Endothelial cell of umbilical vein (primary cell): ENCODE measurements at regions of chr1 and their contacts with region 1.

Region 1: GRCh38 chr1:236502885-236503639 is 20.7 kb upstream of the LGALS8 start:
- DNase-seq: peak; percentile 89
- H3K4me3 ChIP-seq: peak overlapping the region in 1 of 3 experiments; percentile 4
- H3K27ac ChIP-seq: peak overlapping the region; percentile 1
- H3K4me1 ChIP-seq: peaks cover 10% of the 10 kb centered on the region
- H3K27me3 ChIP-seq: no peaks in the 10 kb centered on the region
- CTCF ChIP-seq: no peak
- POLR2A ChIP-seq: peak; percentile 48

Region 2: DNA sequence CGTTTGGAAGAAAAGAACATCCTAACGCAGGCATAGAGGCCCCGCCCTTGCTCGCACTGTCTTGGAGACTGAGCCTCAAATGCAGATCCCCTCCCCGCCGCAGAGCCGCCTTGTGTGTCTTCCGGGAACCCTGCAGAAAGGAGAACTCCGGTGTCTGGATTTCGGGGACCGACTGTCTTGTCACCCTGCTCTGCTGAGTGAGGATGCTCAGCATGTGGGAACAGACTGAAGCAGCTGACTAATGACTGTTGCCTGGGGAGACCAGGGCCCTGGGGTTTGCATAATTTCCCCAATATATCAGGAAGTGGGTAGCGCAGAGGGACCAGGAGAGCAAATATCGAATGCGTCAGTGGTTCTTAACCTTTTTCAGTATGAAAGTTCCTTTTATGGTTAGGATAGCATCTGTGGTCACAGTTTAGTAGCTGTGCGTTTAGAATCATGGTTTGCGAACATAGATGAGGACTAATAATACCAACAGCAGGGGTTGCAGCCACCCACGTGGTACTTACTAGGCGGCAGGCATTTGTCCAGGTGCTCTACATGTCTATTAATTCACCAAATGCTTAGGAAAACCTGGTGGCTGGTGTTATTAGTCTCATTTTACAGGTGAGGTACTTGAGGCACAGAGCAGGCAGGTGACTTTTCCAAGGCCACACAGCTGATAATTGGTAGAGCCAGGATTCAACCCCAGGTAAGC is 346.4 kb before region 1 on chr1:
- CTCF ChIA-PET with region 1: no interaction called
- POLR2A ChIA-PET with region 1: no interaction called
- dilution Hi-C with region 1: no loop called
- intact Hi-C with region 1: no loop called
- DNase-seq: no peak
- H3K4me3 ChIP-seq: no peak overlapping the region
- H3K27ac ChIP-seq: no peak overlapping the region
- H3K4me1 ChIP-seq: no peaks in the 10 kb centered on the region
- H3K27me3 ChIP-seq: no peaks in the 10 kb centered on the region
- CTCF ChIP-seq: no peak
- POLR2A ChIP-seq: no peak

Region 3: GRCh38 chr1:236281654-236282424 is 221.2 kb before region 1 on chr1 and contains the start of gene ERO1B:
- CTCF ChIA-PET with region 1: no interaction called
- POLR2A ChIA-PET with region 1: no interaction called
- dilution Hi-C with region 1: no loop called
- intact Hi-C with region 1: loop called (anchors 5 kb)
- DNase-seq: peak; percentile 95
- H3K4me3 ChIP-seq: peak within 1 kb of the TSS; percentile 39 to 99 (median 65)
- H3K27ac ChIP-seq: no peak within 1 kb of the TSS
- H3K4me1 ChIP-seq: peaks cover 3% of the 10 kb centered on the region
- H3K27me3 ChIP-seq: peaks cover 16 to 22% of the 10 kb centered on the region in 2 experiments
- CTCF ChIP-seq: peak in 1 of 2 donors; percentile 2
- POLR2A ChIP-seq: peak; percentile 21
- total RNA-seq, gene ERO1B: 3.6 and 5.1 TPM in 2 replicates

Region 4: DNA sequence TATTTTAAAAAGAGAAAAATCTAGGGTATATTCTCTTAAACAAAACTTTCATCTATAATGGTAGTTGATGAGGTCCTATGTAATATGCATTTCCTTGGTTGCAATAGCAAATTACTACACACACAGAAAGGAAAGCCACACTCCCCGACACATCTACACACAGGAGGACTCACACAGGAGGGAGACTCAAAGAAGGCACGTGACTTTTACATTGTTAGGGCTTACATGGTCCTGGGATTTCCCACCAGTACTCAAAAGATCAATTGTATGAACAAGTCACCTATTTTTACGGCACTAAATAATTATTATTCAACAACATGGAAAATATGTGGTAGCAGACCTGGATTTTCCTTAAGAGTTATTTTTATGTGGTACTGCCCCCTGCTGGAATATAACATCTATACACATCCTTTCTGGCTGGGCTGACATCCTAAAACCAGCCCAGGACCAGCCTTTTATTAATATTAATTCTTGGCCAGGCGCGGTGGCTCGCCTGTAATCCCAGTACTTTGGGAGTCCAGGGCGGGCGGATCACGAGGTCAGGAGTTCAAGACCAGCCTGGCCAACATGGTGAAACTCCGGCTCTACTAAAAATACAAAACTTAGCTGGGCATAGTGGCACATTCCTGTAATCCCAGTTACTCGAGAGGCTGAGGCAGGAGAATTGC is 13.2 kb before region 1 on chr1:
- CTCF ChIA-PET with region 1: interaction called, 9 read pairs
- POLR2A ChIA-PET with region 1: no interaction called
- dilution Hi-C with region 1: no loop called
- intact Hi-C with region 1: loop called (anchors 1 kb)
- DNase-seq: peak; percentile 37
- H3K4me3 ChIP-seq: no peak overlapping the region
- H3K27ac ChIP-seq: no peak overlapping the region
- H3K4me1 ChIP-seq: no peaks in the 10 kb centered on the region
- H3K27me3 ChIP-seq: no peaks in the 10 kb centered on the region
- CTCF ChIP-seq: peak; percentile 33 to 46
- POLR2A ChIP-seq: no peak

Region 5: GRCh38 chr1:236515443-236515958 is 12.4 kb after region 1 on chr1:
- CTCF ChIA-PET with region 1: interaction called, 3 read pairs
- POLR2A ChIA-PET with region 1: no interaction called
- dilution Hi-C with region 1: no loop called
- intact Hi-C with region 1: loop called (anchors 1 kb)
- DNase-seq: peak; percentile 17
- H3K4me3 ChIP-seq: no peak overlapping the region
- H3K27ac ChIP-seq: no peak overlapping the region
- H3K4me1 ChIP-seq: no peaks in the 10 kb centered on the region
- H3K27me3 ChIP-seq: peaks cover 0 to 5% of the 10 kb centered on the region in 2 experiments
- CTCF ChIP-seq: no peak
- POLR2A ChIP-seq: no peak

Region 6: DNA sequence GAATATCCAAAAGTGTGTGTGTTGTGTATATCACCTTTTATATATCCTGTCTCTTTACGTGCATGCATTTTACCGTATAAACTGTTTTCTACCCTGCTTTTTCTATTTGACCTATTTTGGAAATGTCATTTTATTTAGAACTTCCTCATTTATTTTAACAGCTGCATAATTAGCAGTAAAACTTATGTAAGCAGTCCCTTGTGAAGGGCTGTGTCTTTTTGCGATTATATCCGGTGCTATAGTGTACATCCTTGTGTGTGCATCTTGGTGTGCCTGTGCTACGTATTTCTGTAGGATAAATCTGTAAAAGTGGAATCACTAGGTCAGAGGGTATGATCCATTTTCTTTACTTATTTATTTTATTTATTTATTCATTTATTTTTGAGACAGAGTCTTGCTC is 27.9 kb after region 1 on chr1:
- CTCF ChIA-PET with region 1: no interaction called
- POLR2A ChIA-PET with region 1: interaction called, 3 read pairs
- dilution Hi-C with region 1: no loop called
- intact Hi-C with region 1: loop called (anchors 1 kb)
- DNase-seq: no peak
- H3K4me3 ChIP-seq: no peak overlapping the region
- H3K27ac ChIP-seq: no peak overlapping the region
- H3K4me1 ChIP-seq: peaks cover 14% of the 10 kb centered on the region
- H3K27me3 ChIP-seq: no peaks in the 10 kb centered on the region
- CTCF ChIP-seq: no peak
- POLR2A ChIP-seq: no peak

Region 7: DNA sequence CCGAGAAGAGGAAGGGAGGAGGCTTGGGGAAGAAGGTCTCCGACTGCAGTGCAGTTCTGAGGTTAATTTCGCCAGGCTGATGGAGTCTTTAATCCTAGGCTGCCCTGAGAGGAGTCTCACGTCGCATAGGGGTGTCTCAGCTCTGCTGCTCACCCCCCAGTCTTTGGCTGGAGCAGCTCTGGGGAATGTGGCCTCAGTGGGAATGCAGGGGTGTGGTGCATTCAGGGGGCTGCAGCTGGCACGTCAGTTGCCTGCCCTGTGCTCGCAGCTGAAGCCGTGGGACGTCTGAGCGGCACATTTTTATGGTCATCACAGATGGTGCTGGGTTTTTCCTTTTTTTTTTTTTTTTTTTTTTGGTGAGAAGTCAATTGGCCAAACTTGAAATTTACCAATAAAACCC is 221.4 kb after region 1 on chr1:
- CTCF ChIA-PET with region 1: no interaction called
- POLR2A ChIA-PET with region 1: no interaction called
- dilution Hi-C with region 1: no loop called
- intact Hi-C with region 1: no loop called
- DNase-seq: no peak
- H3K4me3 ChIP-seq: no peak overlapping the region
- H3K27ac ChIP-seq: no peak overlapping the region
- H3K4me1 ChIP-seq: no peaks in the 10 kb centered on the region
- H3K27me3 ChIP-seq: no peaks in the 10 kb centered on the region
- CTCF ChIP-seq: no peak
- POLR2A ChIP-seq: no peak